ENCODE measurements at regions of chr13 and their contacts with region 1.

Region 1: GRCh38 chr13:28138012-28138755 is at the start of gene PAN3:
- DNase-seq: peak; percentile 95
- H3K4me3 ChIP-seq: peak within 1 kb of the TSS; percentile 74 to 100 (median 99)
- H3K27ac ChIP-seq: peak within 1 kb of the TSS; percentile 94 to 100 (median 99)
- H3K4me1 ChIP-seq: peaks cover 0 to 30% (median 27%) of the 10 kb centered on the region in 4 donors
- H3K27me3 ChIP-seq: no peaks in the 10 kb centered on the region
- CTCF ChIP-seq: no peak
- EP300 ChIP-seq: peak in 1 of 4 donors; percentile 40
- POLR2A ChIP-seq: peak; percentile 26 to 43
- total RNA-seq, gene PAN3: 39.2 to 43.3 (median 41.7) TPM

Region 2: DNA sequence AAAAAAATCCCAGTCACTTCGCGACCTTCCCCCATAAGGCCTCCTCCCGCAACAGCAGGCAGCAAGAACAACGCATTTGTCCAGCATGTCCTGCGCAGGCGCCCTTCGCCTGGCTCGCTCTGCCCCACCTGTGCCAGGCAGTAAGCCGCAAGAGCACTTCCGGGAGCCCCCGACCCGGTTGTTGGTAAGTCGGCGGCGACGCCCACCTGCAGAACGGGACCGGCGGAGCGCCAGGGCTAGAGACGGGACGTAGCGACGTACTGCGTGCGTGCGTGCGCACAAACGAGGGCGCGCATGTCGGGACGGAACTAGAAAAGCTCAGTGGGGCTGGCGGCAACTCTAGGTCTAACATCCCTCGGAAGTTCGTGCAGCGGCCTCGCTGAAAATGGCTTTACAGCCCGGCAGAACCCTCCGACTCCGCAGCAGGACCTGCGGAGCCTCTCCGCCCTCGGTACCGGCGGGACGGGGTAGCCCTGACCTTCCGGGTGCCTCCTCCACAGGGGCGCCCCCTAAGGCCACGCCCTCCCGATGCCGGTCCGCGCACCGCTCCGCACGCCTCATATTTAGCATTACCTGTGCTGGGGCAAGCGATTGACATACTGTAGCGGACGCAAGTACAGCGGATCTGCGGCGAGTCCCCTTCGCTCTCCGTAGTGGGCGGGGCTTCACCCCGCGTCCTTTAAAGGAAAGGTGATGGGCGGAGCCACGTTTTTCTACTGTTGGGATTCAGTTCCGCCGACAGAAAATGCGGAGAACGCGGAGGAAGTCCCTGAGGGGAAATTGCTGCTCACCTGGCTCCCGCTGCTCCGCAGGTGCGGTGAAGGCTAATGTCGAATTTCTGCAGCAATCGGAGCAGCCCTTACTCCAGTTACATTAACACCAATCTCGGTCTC is 688.0 kb before region 1 on chr13 and contains the start of gene MTIF3:
- intact Hi-C with region 1: loop called (anchors 5 kb)
- DNase-seq: peak; percentile 96
- H3K4me3 ChIP-seq: peak within 1 kb of the TSS; percentile 68 to 98 (median 90)
- H3K27ac ChIP-seq: peak within 1 kb of the TSS; percentile 95 to 100 (median 98)
- H3K4me1 ChIP-seq: peaks cover 0 to 45% (median 28%) of the 10 kb centered on the region in 4 donors
- H3K27me3 ChIP-seq: no peaks in the 10 kb centered on the region
- CTCF ChIP-seq: peak in 1 of 4 experiments; percentile 32
- EP300 ChIP-seq: peak in 1 of 4 donors; percentile 16
- POLR2A ChIP-seq: peak; percentile 78 to 84
- total RNA-seq, gene MTIF3: 64.3 to 102 (median 74.4) TPM

Region 3: DNA sequence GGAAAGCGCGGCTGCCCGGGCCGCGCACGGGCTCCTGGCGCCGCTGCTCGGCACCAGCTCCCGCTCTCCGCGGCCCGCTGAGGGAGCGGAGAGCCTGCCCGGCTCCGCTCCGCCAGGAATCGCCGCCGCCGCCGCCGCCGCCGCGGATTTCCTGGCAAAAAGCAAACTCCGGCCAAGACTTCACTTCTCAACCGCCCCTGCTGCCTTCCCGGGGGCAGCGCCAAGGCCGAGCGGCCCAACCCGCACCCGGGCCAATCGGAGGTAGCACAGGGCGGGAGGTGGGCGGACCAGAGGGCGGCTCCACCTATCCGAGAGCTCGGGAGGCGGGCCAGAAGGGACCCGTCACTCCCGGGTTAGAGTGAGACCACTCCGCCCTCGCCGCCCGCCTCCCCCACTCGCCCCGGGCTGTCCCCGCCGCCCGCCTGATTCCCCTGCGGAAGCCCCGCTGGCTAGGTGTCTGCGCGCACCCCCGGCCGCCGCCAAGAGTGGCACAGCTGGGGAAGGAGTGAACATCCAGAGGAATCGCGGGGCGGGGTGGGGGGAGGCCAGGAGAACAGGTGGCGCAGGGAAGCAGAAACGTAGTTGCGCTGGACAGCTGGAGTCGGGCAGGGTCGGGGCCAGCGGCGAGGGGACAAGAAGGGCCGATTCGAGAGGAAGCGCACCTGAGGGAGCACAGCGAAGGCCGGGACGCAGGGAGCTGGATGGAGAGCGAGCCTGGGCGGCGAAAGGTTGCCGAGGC is 517.6 kb before region 1 on chr13 and contains the start of gene LNX2:
- intact Hi-C with region 1: loop called (anchors 10 kb)
- DNase-seq: peak; percentile 99
- H3K4me3 ChIP-seq: peak within 1 kb of the TSS; percentile 85 to 95 (median 92)
- H3K27ac ChIP-seq: peak within 1 kb of the TSS; percentile 91 to 98 (median 96)
- H3K4me1 ChIP-seq: peaks cover 0 to 38% (median 27%) of the 10 kb centered on the region in 4 donors
- H3K27me3 ChIP-seq: no peaks in the 10 kb centered on the region
- CTCF ChIP-seq: no peak
- EP300 ChIP-seq: no peak
- POLR2A ChIP-seq: peak; percentile 63 to 77
- total RNA-seq, gene LNX2: 7.7 to 13.9 (median 10.6) TPM

Region 4: GRCh38 chr13:28077231-28077630 is 61.0 kb before region 1 on chr13:
- intact Hi-C with region 1: no loop called
- DNase-seq: no peak
- H3K4me3 ChIP-seq: no peak overlapping the region
- H3K27ac ChIP-seq: no peak overlapping the region
- H3K4me1 ChIP-seq: no peaks in the 10 kb centered on the region
- H3K27me3 ChIP-seq: no peaks in the 10 kb centered on the region
- CTCF ChIP-seq: no peak
- EP300 ChIP-seq: no peak
- POLR2A ChIP-seq: no peak

Region 5: DNA sequence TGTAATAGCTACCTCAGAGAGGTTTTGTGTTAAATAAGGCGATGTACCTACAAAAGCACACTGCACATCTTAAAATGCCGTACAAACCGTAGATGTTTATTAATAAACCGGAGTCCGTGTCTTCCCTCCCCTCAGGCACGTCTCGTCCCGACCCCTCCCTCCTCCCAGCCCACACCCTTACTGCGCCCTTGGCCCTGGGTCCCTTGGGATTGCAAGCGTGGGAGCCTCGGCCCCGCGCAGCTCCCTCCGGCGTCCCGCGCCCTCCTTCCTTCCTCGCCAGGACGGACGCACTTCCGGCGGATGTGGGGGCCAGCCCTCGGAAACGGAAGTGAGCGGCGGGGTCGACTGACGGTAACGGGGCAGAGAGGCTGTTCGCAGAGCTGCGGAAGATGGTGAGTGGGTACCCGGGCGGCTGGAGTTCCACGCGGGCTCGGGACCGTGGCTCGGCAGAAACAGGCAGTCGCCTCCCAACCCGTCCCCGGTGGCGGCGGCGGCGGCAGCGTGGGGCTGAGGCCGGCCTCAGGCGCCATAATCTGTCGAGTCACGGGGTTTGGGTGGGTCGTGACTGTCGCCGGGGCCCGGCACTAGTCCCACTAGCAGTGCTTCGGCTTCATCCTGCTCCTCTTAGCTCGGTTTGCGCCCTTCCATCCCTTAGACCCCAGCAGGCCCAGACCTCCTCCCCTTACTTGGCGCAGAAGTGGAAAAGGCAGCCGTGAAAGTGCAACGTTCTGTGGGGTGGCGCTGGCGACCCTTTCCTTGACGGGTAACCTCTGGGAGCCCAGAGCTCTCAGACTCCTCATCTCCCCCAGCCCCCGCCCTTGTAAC is 520.8 kb after region 1 on chr13 and contains the start of gene POMP:
- intact Hi-C with region 1: loop called (anchors 10 kb)
- DNase-seq: peak; percentile 96
- H3K4me3 ChIP-seq: peak within 1 kb of the TSS; percentile 61 to 92 (median 75)
- H3K27ac ChIP-seq: peak within 1 kb of the TSS; percentile 86 to 96 (median 90)
- H3K4me1 ChIP-seq: peaks cover 0 to 52% (median 46%) of the 10 kb centered on the region in 4 donors
- H3K27me3 ChIP-seq: no peaks in the 10 kb centered on the region
- CTCF ChIP-seq: no peak
- EP300 ChIP-seq: peak in 2 of 4 donors; percentile 73 to 75
- POLR2A ChIP-seq: peak; percentile 95 to 98
- total RNA-seq, gene POMP: 38.6 to 96.4 (median 66.7) TPM

Region 6: DNA sequence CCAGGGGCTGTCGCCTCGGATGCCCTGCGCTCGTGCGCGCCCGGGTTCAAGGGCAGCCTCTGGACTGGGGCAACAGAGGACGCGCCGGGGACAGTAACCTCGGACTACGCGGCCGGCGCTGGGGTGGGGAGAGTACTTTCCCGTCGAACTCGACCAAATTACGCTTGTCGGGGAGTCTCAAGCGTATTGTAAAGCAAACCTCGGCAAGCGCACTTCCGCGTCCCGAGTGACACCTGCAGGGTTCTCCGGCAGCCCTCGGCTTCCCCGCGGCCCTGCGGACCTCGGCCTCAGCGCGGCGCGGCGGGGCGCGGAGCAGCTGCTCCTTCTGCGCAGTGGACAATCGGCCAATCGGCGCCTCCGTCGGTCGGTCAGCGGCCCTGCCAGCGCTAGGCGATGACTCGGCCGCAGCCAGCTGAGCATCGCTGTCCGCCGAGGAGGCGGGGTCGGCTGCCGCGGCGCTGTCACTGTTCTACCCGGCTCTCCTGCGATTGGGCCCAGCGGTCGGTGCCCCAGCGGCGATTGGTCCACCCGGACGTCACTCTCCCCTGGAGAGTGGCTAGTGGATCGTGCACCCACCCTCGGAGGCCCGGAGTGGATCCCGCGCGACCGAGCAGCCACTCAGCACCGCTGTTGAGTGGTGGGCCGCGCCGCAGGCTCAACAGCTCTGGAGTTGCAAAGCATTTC is 580.5 kb after region 1 on chr13 and contains the start of gene SLC46A3:
- intact Hi-C with region 1: loop called (anchors 5 kb)
- DNase-seq: peak; percentile 99
- H3K4me3 ChIP-seq: peak within 1 kb of the TSS; percentile 67 to 75 (median 74)
- H3K27ac ChIP-seq: peak within 1 kb of the TSS; percentile 90 to 98 (median 93)
- H3K4me1 ChIP-seq: peaks cover 0 to 21% (median 16%) of the 10 kb centered on the region in 4 donors
- H3K27me3 ChIP-seq: no peaks in the 10 kb centered on the region
- CTCF ChIP-seq: no peak
- EP300 ChIP-seq: no peak
- POLR2A ChIP-seq: peak; percentile 21 to 47
- total RNA-seq, gene SLC46A3: 14.1 to 18.2 (median 15.1) TPM

Measured in sigmoid colon (tissue), 7 donors.